PC-9 (cell line): ENCODE measurements at regions of chr1 and their contacts with region 1.

Region 1: DNA sequence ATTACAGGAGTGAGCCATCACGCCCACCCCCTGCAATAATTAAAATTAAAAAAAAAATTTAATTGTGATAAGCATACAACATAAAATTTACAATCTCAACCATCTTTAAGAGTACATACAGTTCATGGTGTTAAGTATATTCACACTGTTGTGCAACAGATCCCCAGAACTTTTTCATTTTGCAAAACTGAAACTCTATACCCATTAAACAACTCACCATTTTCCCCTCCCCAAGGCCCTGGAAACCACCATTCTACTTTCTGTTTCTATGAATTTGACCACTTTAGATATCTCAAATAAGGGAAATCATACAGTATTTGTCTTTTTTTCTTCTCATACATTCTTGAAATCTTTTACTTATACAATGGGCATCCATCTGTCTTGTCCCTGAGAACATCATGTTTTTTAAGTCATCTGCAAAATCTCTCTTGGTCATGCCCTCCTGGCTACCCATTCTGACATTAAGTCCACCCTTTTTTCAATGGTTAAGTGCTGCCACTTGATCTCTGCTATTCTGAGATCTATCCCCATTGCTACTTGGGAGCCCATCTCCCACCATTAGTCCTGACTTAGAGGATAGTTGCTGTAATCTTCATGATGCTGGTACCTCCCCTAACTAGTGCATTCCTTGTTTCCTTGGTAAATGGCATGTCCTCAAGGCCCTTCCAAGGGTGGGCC is 39.4 kb upstream of the ZFYVE9 start:
- DNase-seq: no peak
- H3K4me3 ChIP-seq: no peak overlapping the region
- H3K27ac ChIP-seq: no peak overlapping the region
- H3K4me1 ChIP-seq: no peaks in the 10 kb centered on the region
- H3K27me3 ChIP-seq: no peaks in the 10 kb centered on the region
- CTCF ChIP-seq: no peak

Region 2: GRCh38 chr1:51936531-51936930 is 165.9 kb before region 1 on chr1:
- CTCF ChIA-PET with region 1: no interaction called
- POLR2A ChIA-PET with region 1: no interaction called
- intact Hi-C with region 1: no loop called
- DNase-seq: peak in 1 of 2 experiments; percentile 9
- H3K4me3 ChIP-seq: no peak overlapping the region
- H3K27ac ChIP-seq: no peak overlapping the region
- H3K4me1 ChIP-seq: no peaks in the 10 kb centered on the region
- H3K27me3 ChIP-seq: no peaks in the 10 kb centered on the region
- CTCF ChIP-seq: no peak

Region 3: GRCh38 chr1:52080014-52080415 is 22.5 kb before region 1 on chr1:
- CTCF ChIA-PET with region 1: no interaction called
- POLR2A ChIA-PET with region 1: interaction called, 16 read pairs
- intact Hi-C with region 1: no loop called
- DNase-seq: no peak
- H3K4me3 ChIP-seq: no peak overlapping the region
- H3K27ac ChIP-seq: no peak overlapping the region
- H3K4me1 ChIP-seq: no peaks in the 10 kb centered on the region
- H3K27me3 ChIP-seq: no peaks in the 10 kb centered on the region
- CTCF ChIP-seq: no peak